Activated CD4-positive, alpha-beta T cell treated with anti-CD3 and anti-CD28 coated beads, Interleukin-2, amount 10 ng/mL, durations not matched to agents 24 days and 14 days (primary cell): ENCODE measurements at regions of chr4 and their contacts with region 1.

Region 1: DNA sequence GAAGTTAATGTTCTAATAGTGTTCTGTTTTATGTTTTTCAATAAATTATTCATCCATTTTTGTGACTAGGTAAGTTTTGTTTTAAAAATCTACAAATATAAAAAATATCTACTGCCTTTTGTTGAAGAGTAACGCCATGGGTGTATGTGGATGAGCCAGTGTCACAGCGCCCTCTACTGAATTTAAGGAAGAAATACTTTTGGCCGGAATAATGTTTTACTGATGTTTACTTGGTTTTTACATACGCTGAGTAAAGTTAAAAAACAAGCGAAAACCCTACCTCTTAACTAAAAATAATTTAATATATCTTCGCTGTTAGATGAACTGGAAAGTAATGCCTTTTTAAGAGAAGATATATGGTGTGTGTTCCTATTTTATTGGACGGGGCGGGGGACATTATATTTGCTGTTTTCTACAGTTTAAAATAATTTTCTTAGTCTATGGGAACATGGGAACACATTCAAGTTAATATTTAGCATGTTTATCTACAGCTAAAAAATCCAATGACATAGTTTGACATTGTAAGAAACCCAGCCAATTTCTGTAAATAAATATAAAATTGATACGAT is 86.1 kb downstream of the CPE start:
- DNase-seq: peak; percentile 65
- H3K4me3 Mint-ChIP-seq: no peak overlapping the region
- H3K27ac Mint-ChIP-seq: no peak overlapping the region
- H3K4me1 Mint-ChIP-seq: no peaks in the 10 kb centered on the region
- H3K27me3 Mint-ChIP-seq: peaks cover 7% of the 10 kb centered on the region

Region 2: GRCh38 chr4:164770719-164771492 is 694.0 kb before region 1 on chr4:
- intact Hi-C with region 1: loop called (anchors 5 kb)
- DNase-seq: no peak
- H3K4me3 Mint-ChIP-seq: no peak overlapping the region
- H3K27ac Mint-ChIP-seq: no peak overlapping the region
- H3K4me1 Mint-ChIP-seq: no peaks in the 10 kb centered on the region
- H3K27me3 Mint-ChIP-seq: peaks cover 8% of the 10 kb centered on the region

Region 3: DNA sequence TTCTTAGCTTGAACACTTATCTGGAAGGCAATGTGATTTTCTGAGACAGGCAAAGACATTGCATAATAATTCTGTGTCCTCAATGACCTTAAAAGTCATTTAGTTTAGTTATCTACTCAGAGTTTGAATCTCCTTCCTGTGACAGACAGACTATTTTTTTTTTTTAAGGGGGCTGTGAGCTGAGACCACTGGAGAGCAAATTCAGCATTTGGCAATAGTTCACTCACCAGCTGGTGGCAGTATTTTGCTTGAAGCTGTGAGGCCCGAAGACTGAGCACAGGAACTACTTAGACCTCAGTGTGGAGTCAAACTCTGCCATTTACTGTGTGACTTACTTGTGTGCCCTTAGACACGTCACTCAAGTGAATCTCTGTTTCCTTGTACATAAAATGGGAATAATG is 109.0 kb before region 1 on chr4:
- intact Hi-C with region 1: loop called (anchors 2 kb)
- DNase-seq: no peak
- H3K4me3 Mint-ChIP-seq: no peak overlapping the region
- H3K27ac Mint-ChIP-seq: no peak overlapping the region
- H3K4me1 Mint-ChIP-seq: no peaks in the 10 kb centered on the region
- H3K27me3 Mint-ChIP-seq: peaks cover 40% of the 10 kb centered on the region